Uterus (tissue), 4 donors: ENCODE measurements at regions of chr1 and their contacts with region 1.

Region 1: GRCh38 chr1:53196485-53197270 is at the start of gene CPT2:
- DNase-seq: peak; percentile 93 to 95
- H3K4me3 ChIP-seq: peak within 1 kb of the TSS; percentile 86 to 87
- H3K27ac ChIP-seq: peak within 1 kb of the TSS; percentile 97
- H3K4me1 ChIP-seq: peaks cover 0 to 18% of the 10 kb centered on the region in 2 donors
- H3K27me3 ChIP-seq: no peaks in the 10 kb centered on the region
- CTCF ChIP-seq: peak; percentile 7 to 36 (median 9)
- POLR2A ChIP-seq: peak; percentile 96 to 99
- total RNA-seq, gene CPT2: 2.4 to 83.3 (median 10.2) TPM

Region 2: DNA sequence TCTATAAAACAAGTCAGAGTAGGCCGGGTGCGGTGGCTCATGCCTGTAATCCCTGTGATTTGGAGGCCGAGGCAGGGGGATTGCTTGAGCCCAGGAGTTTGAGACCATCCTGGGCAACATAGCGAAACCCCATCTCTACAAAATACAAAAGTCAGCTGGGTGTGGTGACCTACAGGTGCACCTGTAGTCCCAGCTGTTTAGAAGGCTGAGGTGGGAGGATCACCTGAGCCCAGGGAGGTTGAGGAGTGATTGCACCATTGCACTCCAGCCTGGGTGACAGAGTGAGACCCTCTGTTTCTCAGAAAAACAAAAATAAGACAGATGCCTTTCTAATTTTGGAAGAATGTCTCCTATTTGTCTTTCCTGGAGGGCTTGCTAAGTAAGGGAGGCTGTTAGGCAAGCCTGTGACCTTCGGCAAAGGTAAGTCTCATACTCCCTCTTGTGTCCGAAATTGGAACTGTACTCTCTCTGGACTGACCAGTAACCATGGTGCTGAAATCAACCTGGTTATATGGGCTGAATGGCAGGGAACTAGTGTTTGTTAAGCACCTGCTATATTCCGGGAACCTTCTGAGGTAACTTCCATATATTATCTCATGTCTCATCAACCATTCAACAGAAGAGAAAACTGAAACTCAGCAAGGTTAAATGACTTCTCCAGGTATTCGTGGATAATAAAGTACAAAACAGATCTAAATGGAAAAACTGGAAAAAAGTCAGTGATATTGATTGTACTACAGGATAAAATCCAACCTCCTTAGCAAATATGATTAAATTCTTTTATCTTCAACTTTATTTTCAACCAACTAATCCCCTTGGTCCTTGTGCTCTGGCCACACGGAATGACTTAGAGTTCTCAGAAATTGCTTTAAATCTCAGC is 1194.4 kb before region 1 on chr1:
- intact Hi-C with region 1: no loop called
- DNase-seq: peak in 1 of 2 donors; percentile 31
- H3K4me3 ChIP-seq: no peak overlapping the region
- H3K27ac ChIP-seq: no peak overlapping the region
- H3K4me1 ChIP-seq: no peaks in the 10 kb centered on the region
- H3K27me3 ChIP-seq: no peaks in the 10 kb centered on the region
- CTCF ChIP-seq: peak; percentile 76 to 86 (median 82)
- POLR2A ChIP-seq: no peak

Region 3: DNA sequence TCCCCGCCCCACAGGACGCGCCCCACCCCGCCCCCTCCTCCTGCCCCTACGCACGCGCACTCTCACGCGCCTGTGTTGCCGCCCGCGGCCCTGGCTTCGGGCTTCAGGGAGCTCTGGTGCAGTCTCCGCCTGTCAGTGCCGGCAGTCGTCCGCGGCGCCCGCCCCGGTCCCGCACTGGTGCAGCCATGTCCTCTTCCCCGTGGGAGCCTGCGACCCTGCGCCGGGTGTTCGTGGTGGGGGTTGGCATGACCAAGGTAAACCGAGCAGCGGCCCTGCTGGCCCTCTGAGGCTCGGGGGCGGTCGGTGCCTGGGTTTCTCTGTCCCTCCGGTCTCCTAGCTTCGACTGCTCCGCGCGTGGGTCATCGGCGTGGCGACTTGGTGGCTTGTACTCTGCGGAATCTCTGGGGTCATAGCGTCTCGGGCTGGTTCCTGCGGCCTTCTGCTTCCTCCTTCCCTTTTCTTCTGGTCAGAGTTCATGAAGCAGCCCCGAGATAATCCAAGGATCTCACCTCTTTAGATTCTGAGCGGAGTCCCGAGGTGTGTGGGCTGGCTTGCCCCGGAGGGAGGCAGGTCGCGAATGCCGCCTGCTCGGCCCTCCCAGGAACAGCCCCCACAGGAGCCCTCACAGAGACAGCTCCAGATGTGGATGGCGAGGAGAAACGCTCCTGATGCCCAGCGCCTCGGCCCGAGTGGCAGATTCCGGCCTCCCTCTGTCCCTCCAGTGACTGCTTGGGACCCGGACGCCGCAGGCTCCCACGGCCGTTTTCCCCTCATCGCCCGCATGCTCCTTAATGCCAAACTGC is 269.3 kb before region 1 on chr1 and contains the start of gene SCP2:
- intact Hi-C with region 1: loop called (anchors 10 kb)
- DNase-seq: peak; percentile 84 to 86
- H3K4me3 ChIP-seq: peak within 1 kb of the TSS; percentile 65 to 75
- H3K27ac ChIP-seq: peak within 1 kb of the TSS; percentile 71 to 78
- H3K4me1 ChIP-seq: peaks cover 3 to 8% of the 10 kb centered on the region in 2 donors
- H3K27me3 ChIP-seq: no peaks in the 10 kb centered on the region
- CTCF ChIP-seq: no peak
- POLR2A ChIP-seq: peak; percentile 47 to 73
- total RNA-seq, gene SCP2: 29.2 to 151 (median 84.6) TPM